ENCODE measurements at regions of chr7 and their contacts with region 1.

Region 1: GRCh38 chr7:139725077-139725476 is 52.7 kb downstream of the HIPK2 start:
- DNase-seq: no peak
- H3K4me3 ChIP-seq: no peak overlapping the region
- H3K27ac ChIP-seq: no peak overlapping the region
- H3K4me1 ChIP-seq: peaks cover 47 to 85% (median 59%) of the 10 kb centered on the region in 4 donors
- H3K27me3 ChIP-seq: no peaks in the 10 kb centered on the region
- CTCF ChIP-seq: no peak
- EP300 ChIP-seq: no peak
- POLR2A ChIP-seq: no peak

Region 2: GRCh38 chr7:139651308-139651707 is 73.8 kb before region 1 on chr7:
- intact Hi-C with region 1: loop called (anchors 10 kb)
- DNase-seq: no peak
- H3K4me3 ChIP-seq: no peak overlapping the region
- H3K27ac ChIP-seq: no peak overlapping the region
- H3K4me1 ChIP-seq: peaks cover 21 to 64% (median 50%) of the 10 kb centered on the region in 4 donors
- H3K27me3 ChIP-seq: no peaks in the 10 kb centered on the region
- CTCF ChIP-seq: no peak
- EP300 ChIP-seq: no peak
- POLR2A ChIP-seq: no peak

Region 3: GRCh38 chr7:140136073-140136472 is 411.0 kb after region 1 on chr7:
- intact Hi-C with region 1: no loop called
- DNase-seq: no peak
- H3K4me3 ChIP-seq: no peak overlapping the region
- H3K27ac ChIP-seq: no peak overlapping the region
- H3K4me1 ChIP-seq: no peaks in the 10 kb centered on the region
- H3K27me3 ChIP-seq: no peaks in the 10 kb centered on the region
- CTCF ChIP-seq: no peak
- EP300 ChIP-seq: no peak
- POLR2A ChIP-seq: no peak